ENCODE measurements at regions of chr3 and their contacts with region 1.

Region 1: DNA sequence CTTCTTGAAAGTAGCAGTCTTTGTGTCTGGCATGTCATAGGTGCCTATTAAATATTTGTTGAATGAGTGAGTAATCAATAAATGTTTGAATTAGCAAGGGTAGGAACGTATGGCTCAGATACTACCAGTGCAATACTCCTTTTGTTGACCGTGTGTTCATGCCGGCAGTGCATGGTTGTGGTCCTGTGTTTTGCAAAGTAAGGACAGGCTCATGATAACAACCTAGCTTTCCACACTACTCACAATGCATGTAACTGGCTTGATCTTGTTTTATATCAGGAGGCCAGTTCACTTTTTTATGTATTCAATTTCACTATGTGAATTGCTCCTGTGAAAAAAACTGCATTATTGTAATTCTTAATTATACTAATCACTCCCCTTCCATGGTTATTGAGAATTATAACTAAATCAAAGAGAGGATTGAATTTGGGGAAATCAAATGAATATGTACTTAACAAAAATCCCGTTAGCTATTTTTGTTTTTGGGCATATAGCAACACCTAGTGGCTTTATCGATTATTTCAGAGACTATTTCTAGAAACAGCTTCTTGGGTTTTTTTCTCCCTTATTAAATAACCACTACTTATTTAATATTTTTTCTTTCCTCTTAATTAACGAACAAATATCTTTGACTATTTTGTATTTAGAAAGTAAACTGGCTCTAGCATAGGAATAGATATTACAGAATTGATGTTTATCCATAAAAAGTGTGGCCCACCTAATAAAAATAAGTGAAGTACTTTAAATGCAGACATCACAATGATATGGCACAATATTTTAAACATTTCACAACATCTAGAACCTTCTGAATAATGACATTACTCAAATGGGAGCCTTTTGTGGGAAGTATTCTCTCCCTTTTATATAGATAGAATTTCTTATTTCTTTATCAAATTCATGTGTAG is 218.5 kb downstream of the BBX start:
- DNase-seq: peak; percentile 45
- ATAC-seq: 0 out of 2 replicates have a peak, but pooled peaks have one; percentile 32
- H3K4me3 ChIP-seq: no peak overlapping the region
- H3K27ac ChIP-seq: no peak overlapping the region
- H3K4me1 ChIP-seq: no peaks in the 10 kb centered on the region
- H3K27me3 ChIP-seq: no peaks in the 10 kb centered on the region
- CTCF ChIP-seq: peak; percentile 67
- POLR2A ChIP-seq: no peak
- RAD21 ChIP-seq: peak; percentile 66

Region 2: DNA sequence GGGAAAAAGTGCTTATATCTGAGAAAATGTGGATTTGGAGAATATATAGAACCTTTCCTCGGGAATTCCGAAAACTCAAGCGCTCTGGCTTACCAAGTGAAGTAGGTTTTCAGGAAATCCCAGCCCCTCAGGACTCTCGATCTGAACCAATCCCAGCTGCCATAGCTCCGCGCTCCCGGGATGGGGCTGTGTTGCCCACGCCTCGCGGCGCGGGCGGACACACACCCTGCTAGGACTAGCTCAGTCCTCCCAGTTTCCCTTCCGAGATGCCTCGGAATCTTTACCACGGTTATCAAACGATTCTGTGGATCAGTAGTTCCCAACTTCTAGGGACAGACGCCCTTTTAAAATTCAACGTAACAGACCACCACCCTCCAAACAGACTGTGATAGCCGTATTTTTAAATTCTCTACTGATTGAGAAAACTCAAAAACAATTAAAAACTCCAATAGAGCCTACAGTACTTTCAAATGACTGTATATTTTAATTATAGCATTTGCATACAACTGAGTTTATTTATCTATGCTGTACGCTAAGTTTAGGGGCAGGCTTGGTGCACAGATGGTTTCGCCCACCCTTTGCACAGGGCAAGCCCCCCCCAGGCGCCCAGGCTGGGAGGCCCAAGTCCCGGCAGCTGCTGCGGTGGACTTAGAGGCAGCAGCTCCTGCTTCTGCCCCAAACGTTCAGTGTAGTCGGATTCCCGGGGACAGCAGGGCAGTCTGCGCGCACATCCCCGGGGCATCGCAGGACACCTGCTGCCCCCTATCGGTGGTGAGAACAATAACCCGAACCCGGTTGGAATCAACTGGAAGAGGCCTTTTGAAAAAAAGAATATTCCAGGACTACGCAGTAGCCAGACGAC is 311.7 kb before region 1 on chr3:
- CTCF ChIA-PET with region 1: no interaction called
- POLR2A ChIA-PET with region 1: no interaction called
- dilution Hi-C with region 1: no loop called
- in situ Hi-C with region 1: no loop called
- intact Hi-C with region 1: loop called (anchors 10 kb)
- DNase-seq: peak; percentile 87
- ATAC-seq: peak; percentile 83
- H3K4me3 ChIP-seq: peak overlapping the region; percentile 43
- H3K27ac ChIP-seq: no peak overlapping the region
- H3K4me1 ChIP-seq: peaks cover 2% of the 10 kb centered on the region; the same call in 1 of the 2 replicates
- H3K27me3 ChIP-seq: no peaks in the 10 kb centered on the region
- CTCF ChIP-seq: peak; percentile 93
- POLR2A ChIP-seq: no peak
- RAD21 ChIP-seq: peak; percentile 80

Region 3: DNA sequence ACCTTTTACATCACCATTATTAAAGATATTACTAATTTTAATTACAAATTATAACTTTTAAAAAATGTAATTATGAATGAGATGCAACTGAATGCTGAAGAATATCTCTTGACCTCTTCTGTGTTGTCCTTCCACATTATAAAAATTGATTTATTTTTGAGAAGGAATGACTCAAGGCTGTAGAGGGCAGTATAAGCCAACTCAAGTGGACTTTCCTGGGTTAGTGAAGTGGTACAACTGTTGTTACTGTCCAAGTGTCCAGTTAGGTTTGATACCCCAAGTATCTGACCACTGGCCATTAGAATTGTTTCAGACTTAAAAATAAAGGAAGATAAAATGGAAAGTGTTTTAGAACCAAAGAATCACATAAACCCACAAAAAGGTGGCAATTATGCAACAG is 166.6 kb before region 1 on chr3:
- CTCF ChIA-PET with region 1: no interaction called
- POLR2A ChIA-PET with region 1: no interaction called
- dilution Hi-C with region 1: no loop called
- in situ Hi-C with region 1: no loop called
- intact Hi-C with region 1: loop called (anchors 2 kb)
- DNase-seq: peak; percentile 51
- ATAC-seq: peak; percentile 82
- H3K4me3 ChIP-seq: no peak overlapping the region
- H3K27ac ChIP-seq: no peak overlapping the region
- H3K4me1 ChIP-seq: no peaks in the 10 kb centered on the region
- H3K27me3 ChIP-seq: no peaks in the 10 kb centered on the region
- CTCF ChIP-seq: peak; percentile 61
- POLR2A ChIP-seq: no peak
- RAD21 ChIP-seq: peak; percentile 68

Region 4: DNA sequence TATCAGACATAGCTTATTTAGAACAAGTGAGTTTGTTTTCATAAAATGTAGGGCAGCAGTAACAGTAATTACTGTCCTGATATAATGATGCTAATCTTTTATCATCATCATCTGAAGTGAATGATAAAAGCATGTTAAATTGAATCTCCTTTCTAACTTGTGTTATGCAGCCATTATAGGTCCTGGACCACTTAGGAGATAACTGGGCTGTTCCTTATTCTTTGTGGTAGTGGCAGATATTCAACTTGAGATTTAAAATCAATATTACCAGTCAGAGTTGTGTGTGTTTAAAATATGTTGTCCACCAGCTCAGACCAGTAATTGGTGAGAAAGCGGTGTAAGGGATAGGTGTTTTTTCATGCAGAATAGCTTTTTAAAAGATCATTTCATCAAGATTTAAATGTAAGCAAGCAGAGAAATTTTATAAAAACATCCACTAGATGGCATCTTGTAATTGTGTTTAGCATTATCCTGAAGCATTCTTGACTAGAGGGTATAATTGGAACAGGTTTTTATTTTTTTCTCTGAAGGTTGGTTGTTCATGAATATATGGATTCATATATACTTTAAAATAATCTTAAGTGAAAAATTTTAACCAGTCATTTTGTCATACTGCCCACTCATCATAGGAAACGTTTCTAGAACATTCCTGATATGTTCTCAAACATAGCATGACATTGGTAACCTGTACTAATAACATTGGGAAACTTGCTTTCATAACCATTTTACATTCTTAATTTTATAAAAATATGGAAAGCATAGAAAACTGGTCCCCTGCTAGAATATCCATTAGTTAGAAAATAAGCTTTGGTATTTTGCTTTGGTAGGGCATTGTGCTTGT is 64.6 kb before region 1 on chr3:
- CTCF ChIA-PET with region 1: interaction called, 5 read pairs
- POLR2A ChIA-PET with region 1: no interaction called
- dilution Hi-C with region 1: no loop called
- in situ Hi-C with region 1: loop called (anchors 5 kb)
- intact Hi-C with region 1: loop called (anchors 1 kb)
- DNase-seq: peak; percentile 43
- ATAC-seq: peak; percentile 54; the same call in 1 of the 2 replicates
- H3K4me3 ChIP-seq: no peak overlapping the region
- H3K27ac ChIP-seq: no peak overlapping the region
- H3K4me1 ChIP-seq: 0 out of 2 replicates have a peak, but pooled peaks cover 3% of the 10 kb centered on the region
- H3K27me3 ChIP-seq: no peaks in the 10 kb centered on the region
- CTCF ChIP-seq: peak; percentile 57
- POLR2A ChIP-seq: no peak
- RAD21 ChIP-seq: peak; percentile 50

Region 5: DNA sequence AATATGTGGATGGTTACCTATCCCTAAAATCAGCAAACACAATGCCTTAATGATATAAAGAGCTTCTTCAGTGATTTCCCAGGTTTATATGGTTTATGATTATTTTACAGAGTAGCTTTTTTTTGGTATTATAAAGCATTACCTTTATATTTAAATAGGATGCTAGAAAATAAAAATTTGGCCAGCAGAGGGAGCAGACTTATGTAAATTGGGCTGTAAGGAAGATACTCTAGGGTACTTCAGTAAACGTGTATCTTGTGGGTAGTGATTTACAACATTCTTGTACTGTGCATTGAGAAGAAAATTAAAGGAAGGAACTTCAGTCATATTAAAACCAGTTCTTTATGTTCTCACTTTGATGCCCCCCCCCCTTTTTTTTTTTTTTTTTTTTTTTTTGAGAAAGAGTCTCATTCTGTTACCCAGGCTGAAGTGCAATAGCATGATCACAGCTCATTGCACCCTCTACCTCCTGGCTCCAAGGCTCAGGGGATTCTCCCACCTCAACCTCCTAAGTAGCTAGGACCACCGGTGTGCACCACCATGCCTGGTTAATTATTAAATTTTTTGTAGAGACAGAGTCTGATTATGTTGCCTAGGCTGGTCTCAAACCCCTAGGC is 50.6 kb before region 1 on chr3:
- CTCF ChIA-PET with region 1: interaction called, 3 read pairs
- POLR2A ChIA-PET with region 1: interaction called, 10 read pairs
- dilution Hi-C with region 1: no loop called
- in situ Hi-C with region 1: no loop called
- intact Hi-C with region 1: loop called (anchors 1 kb)
- DNase-seq: peak; percentile 73
- ATAC-seq: peak; percentile 72
- H3K4me3 ChIP-seq: no peak overlapping the region
- H3K27ac ChIP-seq: no peak overlapping the region
- H3K4me1 ChIP-seq: no peaks in the 10 kb centered on the region
- H3K27me3 ChIP-seq: no peaks in the 10 kb centered on the region
- CTCF ChIP-seq: peak; percentile 57
- POLR2A ChIP-seq: no peak
- RAD21 ChIP-seq: peak; percentile 47

Region 6: DNA sequence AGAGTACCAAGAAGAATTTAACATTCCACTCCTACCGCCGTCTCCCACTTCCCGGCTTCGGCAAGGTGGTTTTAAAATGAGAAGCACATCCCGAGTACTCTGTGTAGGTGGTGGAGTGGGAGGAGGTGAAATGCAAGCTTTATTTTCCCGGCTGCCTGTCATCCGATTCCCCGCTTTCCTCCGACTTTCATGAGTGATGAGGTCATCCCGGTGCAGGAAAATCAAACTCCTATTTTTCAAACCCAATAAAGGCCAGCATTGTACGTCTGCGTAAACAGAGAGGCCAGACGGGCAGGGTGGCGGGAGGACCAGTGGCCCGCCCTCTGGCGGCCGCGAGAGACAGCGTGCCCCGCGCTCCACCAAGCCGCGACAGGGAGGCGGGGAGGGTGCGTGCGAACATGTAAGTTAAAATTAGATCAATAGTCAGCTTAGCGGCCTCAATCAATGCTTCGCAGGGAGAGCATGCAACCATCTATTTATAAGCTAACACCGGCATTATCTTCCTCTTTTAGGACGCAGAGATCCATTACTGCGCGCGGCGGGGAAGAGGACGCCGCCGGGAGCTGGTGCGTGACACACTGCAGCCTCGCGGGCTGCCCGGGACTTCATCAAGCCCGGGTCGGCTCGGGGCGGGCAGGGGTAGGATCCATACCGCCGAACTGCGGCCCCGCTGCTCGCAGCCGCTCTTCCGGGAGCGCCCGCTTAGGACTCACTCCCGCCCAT is 186.3 kb after region 1 on chr3:
- CTCF ChIA-PET with region 1: no interaction called
- POLR2A ChIA-PET with region 1: no interaction called
- dilution Hi-C with region 1: no loop called
- in situ Hi-C with region 1: no loop called
- intact Hi-C with region 1: no loop called
- DNase-seq: peak; percentile 67
- ATAC-seq: peak; percentile 100
- H3K4me3 ChIP-seq: peak overlapping the region; percentile 55
- H3K27ac ChIP-seq: no peak overlapping the region
- H3K4me1 ChIP-seq: no peaks in the 10 kb centered on the region
- H3K27me3 ChIP-seq: peaks cover 8% of the 10 kb centered on the region
- CTCF ChIP-seq: peak; percentile 80
- POLR2A ChIP-seq: no peak
- RAD21 ChIP-seq: peak; percentile 64